H1 (cell line): ENCODE measurements at regions of chr10 and their contacts with region 1.

Region 1: GRCh38 chr10:80599424-80599847 is 61.7 kb downstream of the SH2D4B start:
- DNase-seq: peak; percentile 68 to 79
- H3K4me3 ChIP-seq: no peak overlapping the region
- H3K27ac ChIP-seq: no peak overlapping the region
- H3K4me1 ChIP-seq: no peaks in the 10 kb centered on the region; a peak in 1 of 7 replicates
- H3K27me3 ChIP-seq: no peaks in the 10 kb centered on the region; a peak in 1 of 7 replicates
- CTCF ChIP-seq: peak; percentile 87 to 98 (median 87)
- EP300 ChIP-seq: no peak
- POLR2A ChIP-seq: no peak
- RAD21 ChIP-seq: peak; percentile 78 to 85

Region 2: GRCh38 chr10:80344276-80344675 is 255.2 kb before region 1 on chr10:
- CTCF ChIA-PET with region 1: no interaction called
- POLR2A ChIA-PET with region 1: no interaction called
- DNase-seq: no peak
- H3K4me3 ChIP-seq: no peak overlapping the region
- H3K27ac ChIP-seq: no peak overlapping the region
- H3K4me1 ChIP-seq: no peaks in the 10 kb centered on the region
- H3K27me3 ChIP-seq: no peaks in the 10 kb centered on the region
- CTCF ChIP-seq: no peak
- EP300 ChIP-seq: no peak
- POLR2A ChIP-seq: no peak
- RAD21 ChIP-seq: no peak

Region 3: DNA sequence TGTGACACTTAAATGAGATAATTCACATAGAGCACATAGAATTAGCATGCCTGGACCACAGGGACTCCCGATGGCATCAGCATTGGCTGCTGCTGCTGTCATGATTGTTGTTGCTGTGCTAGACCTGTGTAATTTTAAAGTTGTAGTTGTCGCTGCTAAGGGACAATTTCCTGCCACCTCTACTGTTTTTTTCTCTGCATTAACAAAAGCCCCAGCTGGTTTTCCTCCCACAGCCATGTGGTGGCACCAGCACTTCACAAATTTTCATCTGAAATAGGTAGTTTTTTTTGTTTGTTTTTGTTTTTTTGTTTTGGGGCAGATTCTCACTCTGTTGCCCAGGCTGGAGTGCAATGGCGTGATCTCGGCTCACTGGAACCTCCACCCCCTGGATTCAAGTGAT is 216.4 kb before region 1 on chr10:
- CTCF ChIA-PET with region 1: interaction called, 10 read pairs
- POLR2A ChIA-PET with region 1: no interaction called
- DNase-seq: peak in 1 of 2 experiments; percentile 49
- H3K4me3 ChIP-seq: no peak overlapping the region
- H3K27ac ChIP-seq: no peak overlapping the region
- H3K4me1 ChIP-seq: no peaks in the 10 kb centered on the region
- H3K27me3 ChIP-seq: no peaks in the 10 kb centered on the region
- CTCF ChIP-seq: peak in 2 of 3 experiments; percentile 58 to 78; a peak in 3 of 4 replicates
- EP300 ChIP-seq: no peak
- POLR2A ChIP-seq: no peak
- RAD21 ChIP-seq: peak; percentile 82 to 83

Region 4: DNA sequence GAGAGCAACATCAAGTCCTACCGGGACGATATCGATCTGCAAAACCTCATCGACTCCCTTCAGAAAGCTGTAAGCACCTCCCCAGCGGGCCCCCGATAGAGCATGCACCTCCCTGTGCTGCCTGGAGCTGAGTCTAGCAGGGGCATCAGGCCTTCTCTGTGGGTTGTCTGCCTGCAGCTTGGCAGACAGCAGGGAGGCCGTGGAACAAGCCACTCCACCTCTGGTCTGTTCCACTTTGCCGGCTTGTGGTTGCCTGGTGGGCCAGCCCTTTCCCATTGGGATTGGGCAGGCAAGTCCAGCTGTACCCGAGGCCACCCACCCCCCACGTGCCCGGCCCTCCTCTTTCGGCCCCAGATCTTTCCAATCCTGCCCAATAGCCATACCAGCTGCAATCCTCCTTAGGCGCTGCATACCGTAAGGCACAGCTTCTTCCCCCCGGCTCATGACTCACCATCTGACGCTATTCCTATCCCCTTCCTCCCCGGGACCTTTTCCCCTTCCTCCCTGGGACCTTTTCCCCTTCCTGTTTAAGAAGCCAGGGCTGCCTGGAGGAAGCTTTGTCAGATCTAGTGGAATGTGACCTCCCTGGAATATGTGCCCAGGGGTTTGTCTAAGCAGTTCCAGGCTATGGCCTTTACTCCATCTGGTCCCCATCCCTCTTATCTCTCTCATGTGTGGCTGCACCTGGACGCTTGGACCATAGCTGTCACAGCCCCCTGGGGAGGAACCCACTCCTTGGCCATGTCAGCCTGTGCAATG is 89.9 kb before region 1 on chr10:
- CTCF ChIA-PET with region 1: interaction called, 12 read pairs
- POLR2A ChIA-PET with region 1: no interaction called
- DNase-seq: no peak
- H3K4me3 ChIP-seq: no peak overlapping the region
- H3K27ac ChIP-seq: no peak overlapping the region
- H3K4me1 ChIP-seq: peaks cover 0 to 6% (median under 1%) of the 10 kb centered on the region in 4 experiments; a peak in 3 of 7 replicates
- H3K27me3 ChIP-seq: no peaks in the 10 kb centered on the region
- CTCF ChIP-seq: no peak
- EP300 ChIP-seq: no peak
- POLR2A ChIP-seq: no peak
- RAD21 ChIP-seq: no peak

Region 5: GRCh38 chr10:80552151-80552646 is 47.2 kb before region 1 on chr10:
- CTCF ChIA-PET with region 1: interaction called, 13 read pairs
- POLR2A ChIA-PET with region 1: no interaction called
- DNase-seq: peak in 1 of 2 experiments; percentile 50
- H3K4me3 ChIP-seq: no peak overlapping the region
- H3K27ac ChIP-seq: no peak overlapping the region
- H3K4me1 ChIP-seq: peaks cover 0 to 8% (median 3%) of the 10 kb centered on the region in 4 experiments; a peak in 5 of 7 replicates
- H3K27me3 ChIP-seq: no peaks in the 10 kb centered on the region
- CTCF ChIP-seq: no peak
- EP300 ChIP-seq: no peak
- POLR2A ChIP-seq: no peak
- RAD21 ChIP-seq: no peak

Region 6: DNA sequence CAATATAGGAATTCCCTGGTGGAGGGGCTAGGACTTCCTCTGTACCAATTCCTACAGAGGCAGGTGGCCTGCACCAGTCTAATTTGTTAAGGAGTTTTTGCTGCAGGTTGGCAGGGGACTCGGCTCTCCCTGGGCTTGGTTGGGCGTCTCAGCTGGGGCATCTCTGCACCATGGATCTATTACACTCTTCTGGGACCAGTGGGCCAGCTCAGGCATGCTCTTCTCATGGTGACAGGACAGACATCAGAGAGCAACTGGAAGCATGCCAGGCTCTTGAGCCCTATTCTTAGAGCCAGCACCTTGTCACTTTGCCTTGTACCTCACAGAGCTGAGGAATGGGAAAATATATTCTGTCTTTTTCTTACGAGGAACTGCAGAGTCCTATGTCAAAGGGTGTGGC is 12.8 kb after region 1 on chr10:
- CTCF ChIA-PET with region 1: interaction called, 158 read pairs
- POLR2A ChIA-PET with region 1: no interaction called
- DNase-seq: no peak
- H3K4me3 ChIP-seq: no peak overlapping the region
- H3K27ac ChIP-seq: no peak overlapping the region
- H3K4me1 ChIP-seq: no peaks in the 10 kb centered on the region; a peak in 1 of 7 replicates
- H3K27me3 ChIP-seq: no peaks in the 10 kb centered on the region
- CTCF ChIP-seq: no peak
- EP300 ChIP-seq: no peak
- POLR2A ChIP-seq: no peak
- RAD21 ChIP-seq: no peak

Region 7: DNA sequence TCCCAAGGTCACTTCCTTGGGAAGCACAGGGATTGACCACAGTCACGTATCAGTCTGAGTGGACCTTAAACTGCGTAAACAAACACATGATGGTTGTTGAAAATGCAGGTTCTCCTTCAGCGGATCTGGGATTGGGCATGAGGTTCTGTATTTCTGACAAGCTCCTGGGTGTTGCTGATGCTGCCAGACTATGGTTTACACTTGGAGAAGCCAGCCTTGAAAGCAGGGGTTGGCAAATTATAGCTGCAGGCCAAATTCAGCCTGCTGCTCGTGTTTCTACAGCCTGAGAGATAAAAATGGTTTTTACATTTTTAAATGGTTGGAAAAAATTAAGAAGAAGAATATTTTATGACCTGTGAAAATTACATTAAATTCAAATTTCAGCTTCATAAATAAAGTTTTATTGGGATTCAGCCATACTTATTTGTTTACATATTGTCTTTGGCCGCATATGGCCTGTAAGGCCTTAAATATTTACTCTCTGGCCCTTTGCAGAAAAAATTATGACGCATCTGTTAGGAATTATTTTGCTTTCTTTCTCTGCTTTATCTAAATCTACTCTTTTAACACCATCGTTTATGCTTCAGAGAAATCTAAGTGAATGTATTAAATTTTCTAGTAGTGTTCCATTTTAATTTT is 47.9 kb after region 1 on chr10:
- CTCF ChIA-PET with region 1: interaction called, 21 read pairs
- POLR2A ChIA-PET with region 1: no interaction called
- DNase-seq: no peak
- H3K4me3 ChIP-seq: no peak overlapping the region
- H3K27ac ChIP-seq: no peak overlapping the region
- H3K4me1 ChIP-seq: no peaks in the 10 kb centered on the region
- H3K27me3 ChIP-seq: no peaks in the 10 kb centered on the region
- CTCF ChIP-seq: no peak
- EP300 ChIP-seq: no peak
- POLR2A ChIP-seq: no peak
- RAD21 ChIP-seq: no peak

Region 8: GRCh38 chr10:80670763-80671162 is 71.3 kb after region 1 on chr10:
- CTCF ChIA-PET with region 1: interaction called, 51 read pairs
- POLR2A ChIA-PET with region 1: no interaction called
- DNase-seq: no peak
- H3K4me3 ChIP-seq: no peak overlapping the region
- H3K27ac ChIP-seq: no peak overlapping the region
- H3K4me1 ChIP-seq: no peaks in the 10 kb centered on the region
- H3K27me3 ChIP-seq: no peaks in the 10 kb centered on the region
- CTCF ChIP-seq: no peak
- EP300 ChIP-seq: no peak
- POLR2A ChIP-seq: no peak
- RAD21 ChIP-seq: no peak